ENCODE measurements at regions of chr7 and their contacts with region 1.

Region 1: DNA sequence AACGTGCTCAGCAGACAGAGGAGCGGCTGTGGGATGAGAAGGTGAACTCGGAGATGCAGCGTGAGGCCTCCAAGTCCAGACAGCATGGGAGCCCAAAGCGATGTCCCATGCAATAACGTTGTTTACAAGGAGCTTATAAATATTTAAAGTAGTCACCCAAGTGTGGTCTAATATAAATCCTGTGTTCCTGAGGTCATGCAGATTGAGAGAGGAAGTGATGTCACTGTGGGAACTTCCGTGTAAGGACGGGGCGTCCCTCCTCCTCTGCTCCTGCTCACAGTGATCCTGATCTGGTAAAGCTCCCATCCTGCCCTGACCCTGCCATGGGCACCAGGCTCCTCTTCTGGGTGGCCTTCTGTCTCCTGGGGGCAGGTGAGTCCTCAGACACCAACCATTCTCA is 94.7 kb upstream of the PRSS58 start:
- DNase-seq: no peak
- ATAC-seq: peak; percentile 34
- H3K4me3 Mint-ChIP-seq: peak overlapping the region; percentile 60
- H3K27ac Mint-ChIP-seq: peak overlapping the region; percentile 78
- H3K4me1 Mint-ChIP-seq: peaks cover 30% of the 10 kb centered on the region
- H3K27me3 Mint-ChIP-seq: peaks cover 11% of the 10 kb centered on the region

Region 2: GRCh38 chr7:142338633-142339501 is 13.7 kb before region 1 on chr7:
- CTCF ChIA-PET with region 1: interaction called, 11 read pairs
- POLR2A ChIA-PET with region 1: no interaction called
- DNase-seq: no peak
- ATAC-seq: peak; percentile 57
- H3K4me3 Mint-ChIP-seq: no peak overlapping the region
- H3K27ac Mint-ChIP-seq: no peak overlapping the region
- H3K4me1 Mint-ChIP-seq: peaks cover 2% of the 10 kb centered on the region
- H3K27me3 Mint-ChIP-seq: peaks cover 18% of the 10 kb centered on the region

Region 3: DNA sequence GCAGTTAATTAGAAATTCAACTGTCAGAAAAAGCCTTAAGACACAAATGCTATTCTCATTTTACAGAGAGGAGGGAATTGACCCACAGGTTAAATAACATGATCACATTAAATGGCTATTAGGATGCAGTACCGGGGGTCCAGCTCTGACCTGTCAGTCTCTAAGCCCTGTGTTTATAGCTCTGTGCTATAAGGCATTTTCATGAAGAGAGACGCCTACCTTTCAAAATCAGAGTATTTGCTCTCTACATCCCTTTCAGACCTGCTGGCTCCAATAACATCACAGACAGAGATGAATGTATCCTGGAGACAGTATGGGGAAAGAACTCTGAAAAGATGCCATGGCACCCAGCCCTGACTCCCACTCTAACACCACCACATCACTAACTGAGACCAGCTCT is 95.2 kb after region 1 on chr7:
- CTCF ChIA-PET with region 1: no interaction called
- POLR2A ChIA-PET with region 1: no interaction called
- DNase-seq: no peak
- ATAC-seq: no peak
- H3K4me3 Mint-ChIP-seq: no peak overlapping the region
- H3K27ac Mint-ChIP-seq: no peak overlapping the region
- H3K4me1 Mint-ChIP-seq: peaks cover 17% of the 10 kb centered on the region
- H3K27me3 Mint-ChIP-seq: peaks cover 11% of the 10 kb centered on the region

Measured in activated CD8-positive, alpha-beta T cell treated with anti-CD3 and anti-CD28 coated beads, Interleukin-2, amount 10 ng/mL, durations not matched to agents 7 days and 5 days (primary cell).